ENCODE measurements at regions of chr13 and their contacts with region 1.

Region 1: GRCh38 chr13:46553886-46554858 is 1.2 kb downstream of the LRCH1 start:
- DNase-seq: peak; percentile 69
- H3K4me3 ChIP-seq: peak overlapping the region; percentile 98
- H3K27ac ChIP-seq: peak overlapping the region; percentile 96
- H3K4me1 ChIP-seq: peaks cover 62% of the 10 kb centered on the region
- H3K27me3 ChIP-seq: no peaks in the 10 kb centered on the region
- CTCF ChIP-seq: peak; percentile 44

Region 2: GRCh38 chr13:46492946-46493345 is 61.2 kb before region 1 on chr13:
- intact Hi-C with region 1: loop called (anchors 5 kb)
- DNase-seq: no peak
- H3K4me3 ChIP-seq: no peak overlapping the region
- H3K27ac ChIP-seq: no peak overlapping the region
- H3K4me1 ChIP-seq: peaks cover 4% of the 10 kb centered on the region
- H3K27me3 ChIP-seq: peaks cover 4% of the 10 kb centered on the region
- CTCF ChIP-seq: peak; percentile 73

Region 3: DNA sequence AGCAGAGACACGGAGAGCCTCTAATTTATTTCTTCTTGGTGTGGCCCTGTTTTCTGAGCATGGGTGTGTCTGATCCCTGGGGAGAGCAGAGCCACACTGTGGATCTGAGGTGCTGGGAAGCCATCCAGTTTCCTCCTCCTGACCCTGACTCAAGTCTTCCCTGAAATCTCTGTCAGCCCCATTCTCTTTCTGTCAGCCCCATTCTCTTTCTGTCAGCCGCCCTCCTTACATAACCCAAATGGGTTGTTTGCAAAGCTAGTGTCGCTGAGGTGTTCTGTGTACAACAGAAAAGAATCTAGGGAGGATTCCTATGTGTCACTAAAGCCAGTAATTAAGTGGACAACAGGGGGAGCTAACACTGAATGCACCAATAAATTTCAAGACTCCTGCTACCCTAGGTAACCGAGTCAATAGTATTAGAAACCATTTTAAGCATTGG is 49.0 kb after region 1 on chr13:
- intact Hi-C with region 1: loop called (anchors 10 kb)
- DNase-seq: no peak
- H3K4me3 ChIP-seq: no peak overlapping the region
- H3K27ac ChIP-seq: peak overlapping the region; percentile 79
- H3K4me1 ChIP-seq: peaks cover 96% of the 10 kb centered on the region
- H3K27me3 ChIP-seq: no peaks in the 10 kb centered on the region
- CTCF ChIP-seq: peak; percentile 52

Region 4: DNA sequence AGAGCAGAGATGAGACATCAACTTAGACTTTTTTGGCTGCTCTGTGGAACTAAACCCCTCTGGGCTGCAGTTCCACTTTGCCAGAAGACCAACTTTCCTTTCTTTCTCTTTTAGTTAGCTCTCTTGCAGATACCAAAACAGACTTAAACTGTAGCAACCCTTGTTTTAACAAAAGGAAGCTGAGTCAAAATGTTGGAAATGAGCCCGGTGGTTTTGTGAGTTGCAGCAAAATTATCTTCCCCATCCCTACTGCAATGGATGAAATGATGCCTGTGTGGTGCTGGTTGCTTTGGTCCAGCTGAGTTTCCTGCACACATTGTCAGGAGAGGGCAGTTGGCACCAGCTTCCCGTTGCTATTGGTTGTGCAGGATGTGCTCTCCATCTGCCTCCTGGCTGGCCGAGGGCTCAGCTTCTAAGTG is 114.1 kb after region 1 on chr13:
- intact Hi-C with region 1: loop called (anchors 10 kb)
- DNase-seq: peak; percentile 35
- H3K4me3 ChIP-seq: peak overlapping the region; percentile 25
- H3K27ac ChIP-seq: peak overlapping the region; percentile 61
- H3K4me1 ChIP-seq: peaks cover 74% of the 10 kb centered on the region
- H3K27me3 ChIP-seq: no peaks in the 10 kb centered on the region
- CTCF ChIP-seq: no peak

Region 5: DNA sequence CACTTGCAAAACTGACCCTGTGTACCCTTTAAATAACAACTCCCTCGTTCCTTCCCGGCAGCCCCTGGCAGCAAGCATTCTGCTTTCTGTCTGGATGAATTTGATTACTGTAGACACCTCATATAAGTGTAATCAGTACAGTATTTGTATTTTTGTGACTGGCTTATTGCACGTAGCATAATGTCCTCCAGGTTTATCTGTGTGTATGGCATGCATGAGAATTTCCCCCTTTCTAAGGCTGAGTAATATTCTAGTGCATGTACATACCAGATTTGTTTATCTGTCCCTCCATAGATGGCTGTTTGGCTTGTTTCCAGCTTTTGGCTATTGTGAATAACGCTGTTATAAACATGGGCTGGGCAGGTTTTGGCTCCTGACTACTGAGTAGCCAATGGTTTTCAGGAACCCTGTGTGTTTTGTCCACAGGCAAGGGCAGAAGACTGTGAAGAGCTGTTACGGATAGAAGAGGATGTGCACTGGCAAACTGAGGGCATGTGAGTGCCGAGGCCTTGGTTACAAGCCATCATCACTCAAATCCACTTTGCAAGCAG is 144.8 kb after region 1 on chr13:
- intact Hi-C with region 1: loop called (anchors 10 kb)
- DNase-seq: no peak
- H3K4me3 ChIP-seq: no peak overlapping the region
- H3K27ac ChIP-seq: peak overlapping the region; percentile 61
- H3K4me1 ChIP-seq: peaks cover 24% of the 10 kb centered on the region
- H3K27me3 ChIP-seq: no peaks in the 10 kb centered on the region
- CTCF ChIP-seq: no peak

Region 6: DNA sequence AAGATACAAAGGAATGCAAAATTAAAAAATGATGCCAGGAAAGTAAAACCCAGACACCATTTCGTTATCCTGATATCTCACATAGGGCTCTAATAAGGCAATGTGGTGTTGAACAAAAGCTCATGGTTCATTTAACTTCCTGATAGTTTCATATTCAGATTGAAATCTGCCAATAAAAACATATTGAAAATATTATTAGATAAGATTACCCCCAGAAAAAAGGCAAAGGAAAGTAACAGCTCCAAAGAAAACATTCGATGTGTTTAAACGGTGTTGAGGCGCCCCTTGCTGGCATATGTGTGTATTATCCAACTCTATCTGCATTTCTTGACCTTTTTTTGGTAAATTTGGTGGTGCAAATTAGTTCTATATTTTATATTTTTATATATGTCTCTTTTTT is 166.9 kb after region 1 on chr13:
- intact Hi-C with region 1: loop called (anchors 5 kb)
- DNase-seq: peak; percentile 19
- H3K4me3 ChIP-seq: no peak overlapping the region
- H3K27ac ChIP-seq: no peak overlapping the region
- H3K4me1 ChIP-seq: peaks cover 10% of the 10 kb centered on the region
- H3K27me3 ChIP-seq: no peaks in the 10 kb centered on the region
- CTCF ChIP-seq: peak; percentile 79

Region 7: GRCh38 chr13:46761853-46762252 is 207.7 kb after region 1 on chr13:
- intact Hi-C with region 1: no loop called
- DNase-seq: no peak
- H3K4me3 ChIP-seq: no peak overlapping the region
- H3K27ac ChIP-seq: no peak overlapping the region
- H3K4me1 ChIP-seq: no peaks in the 10 kb centered on the region
- H3K27me3 ChIP-seq: no peaks in the 10 kb centered on the region
- CTCF ChIP-seq: no peak

Measured in left ventricle myocardium inferior (tissue), 1 donor.